ENCODE measurements at regions of chr1 and their contacts with region 1.

Region 1: GRCh38 chr1:152189657-152190442 is 30.8 kb upstream of the RPTN start:
- DNase-seq: peak; percentile 75
- ATAC-seq: peak; percentile 86

Region 2: GRCh38 chr1:152052606-152053005 is 137.2 kb before region 1 on chr1:
- intact Hi-C with region 1: loop called (anchors 2 kb)
- DNase-seq: peak; percentile 91
- ATAC-seq: peak; percentile 66

Region 3: DNA sequence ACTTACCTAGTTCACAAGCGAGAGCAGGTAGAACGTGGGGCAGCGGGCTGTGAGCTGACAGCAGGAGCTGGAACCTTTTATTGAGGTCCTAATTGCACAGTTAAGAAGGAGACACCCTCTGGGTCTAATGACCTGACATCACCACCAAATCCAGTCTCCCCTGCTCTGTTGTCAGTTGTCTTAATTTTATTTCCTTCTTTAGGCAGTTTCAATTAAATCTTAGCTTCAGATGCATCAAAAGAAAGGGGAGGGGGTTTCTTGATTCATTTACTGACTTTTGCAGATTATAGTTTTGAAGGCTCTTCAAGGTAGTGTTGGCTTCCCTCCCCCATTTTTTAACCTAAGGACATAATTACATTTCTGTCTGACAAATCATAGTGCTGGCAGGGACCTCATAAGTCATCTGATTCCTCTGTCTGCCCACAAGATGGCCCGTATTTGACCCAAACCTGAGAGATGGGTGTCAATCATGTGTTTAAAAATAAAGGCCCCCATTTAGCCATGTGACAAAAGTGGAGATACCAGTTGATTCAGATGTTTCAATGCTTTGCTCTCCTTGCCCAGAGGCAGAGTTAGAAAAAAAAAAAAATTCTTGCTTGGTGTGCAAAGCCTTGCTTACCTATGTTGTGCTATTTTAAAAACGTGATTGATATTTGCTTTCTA is 100.7 kb before region 1 on chr1 and contains the start of gene TCHHL1:
- intact Hi-C with region 1: no loop called
- DNase-seq: no peak
- ATAC-seq: no peak
- total RNA-seq, gene TCHHL1: not detected

Region 4: GRCh38 chr1:152141974-152142584 is 47.8 kb before region 1 on chr1:
- intact Hi-C with region 1: loop called (anchors 2 kb)
- DNase-seq: peak; percentile 47
- ATAC-seq: peak; percentile 55

Region 5: DNA sequence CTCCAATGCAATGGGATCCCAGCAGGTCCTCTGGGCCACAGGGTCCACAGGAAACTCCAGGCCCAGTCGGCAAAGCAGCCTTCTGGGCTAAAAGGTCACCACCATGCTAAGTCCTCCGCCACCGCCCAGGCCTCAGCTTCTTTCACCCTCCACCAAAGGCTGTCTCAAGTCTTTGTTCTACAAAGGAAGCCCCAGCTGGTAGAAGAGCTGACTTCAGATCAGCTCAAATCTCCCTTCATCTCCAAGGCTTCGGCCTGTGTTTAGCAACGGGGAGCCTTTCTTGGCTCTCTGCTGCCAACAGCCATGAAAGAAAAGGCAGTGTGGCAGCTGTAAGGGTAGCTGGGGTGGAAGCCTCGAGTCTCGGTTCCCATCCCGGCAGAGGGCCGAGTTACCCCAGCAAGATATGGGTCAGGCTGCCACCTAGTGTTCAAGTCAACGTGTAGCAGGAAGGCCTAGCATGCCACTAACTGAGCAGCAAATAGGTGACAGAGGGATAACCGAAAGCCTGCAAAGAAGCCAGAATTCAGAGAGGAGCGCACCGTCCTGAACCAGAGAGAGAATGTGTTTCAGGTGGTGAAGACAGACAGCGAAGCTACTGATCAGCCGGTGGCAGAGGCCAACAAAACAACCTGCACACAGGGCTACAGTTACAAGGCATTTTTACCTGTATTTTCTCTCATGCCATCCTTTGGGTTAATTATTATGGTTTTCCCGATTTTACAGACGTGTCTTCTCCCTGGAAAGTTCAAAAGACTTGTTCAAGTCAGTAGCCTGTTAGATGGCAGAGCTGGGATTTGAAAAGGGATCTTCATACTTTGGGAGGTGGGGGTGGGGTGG is 251.0 kb after region 1 on chr1:
- intact Hi-C with region 1: loop called (anchors 5 kb)
- DNase-seq: peak; percentile 75
- ATAC-seq: peak; percentile 90

Region 6: DNA sequence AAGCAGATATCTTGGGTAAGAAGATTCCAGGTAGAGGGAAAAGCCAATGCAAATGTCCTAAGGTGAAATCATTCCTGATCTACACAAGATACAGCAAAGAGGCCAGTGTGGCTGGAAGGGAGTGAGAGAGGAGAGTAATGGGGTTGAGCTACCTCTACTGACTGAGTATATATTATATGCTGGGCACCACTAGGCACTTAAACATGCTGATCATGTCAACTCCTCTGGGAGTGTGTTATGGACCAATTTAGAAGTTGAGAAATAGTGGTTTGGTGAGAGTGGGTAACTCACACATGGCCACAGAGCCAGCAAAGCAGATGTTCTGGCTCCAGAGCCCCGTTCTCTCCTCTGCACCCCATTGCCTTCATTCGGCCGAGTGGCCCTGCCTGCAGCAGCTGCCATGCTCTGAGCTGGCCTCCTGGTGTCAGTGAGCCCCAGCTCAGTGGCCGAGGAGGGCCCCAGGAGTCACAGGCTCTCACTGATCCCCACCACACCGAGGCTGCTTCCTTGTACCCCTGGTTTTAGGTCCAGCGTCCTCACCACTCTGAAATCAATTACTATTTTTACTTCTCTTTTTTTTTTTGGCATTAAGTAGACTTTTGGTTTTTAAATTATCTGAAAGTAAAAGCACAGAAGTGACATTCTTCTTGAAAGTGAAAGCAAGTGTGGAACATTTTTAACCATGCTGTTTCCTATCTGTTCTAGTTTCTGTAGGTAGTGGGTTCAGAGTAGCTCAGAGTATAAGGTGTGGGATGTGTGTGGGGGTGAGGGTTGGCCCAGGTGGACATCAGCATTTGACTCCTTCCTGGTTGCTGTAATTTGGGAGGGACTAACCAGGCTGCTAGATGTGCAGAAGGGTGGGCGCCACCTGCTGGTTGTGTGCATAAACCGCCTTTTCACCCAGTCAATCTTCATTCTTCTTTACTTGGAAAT is 270.0 kb after region 1 on chr1:
- intact Hi-C with region 1: loop called (anchors 5 kb)
- DNase-seq: peak; percentile 82
- ATAC-seq: peak; percentile 75

Measured in Right ventricle myocardium superior (tissue), 1 donor.